ENCODE measurements at regions of chr4 and their contacts with region 1.

Region 1: GRCh38 chr4:152385551-152385950 is 150.3 kb downstream of the FBXW7 start:
- DNase-seq: peak in 4 of 14 experiments; percentile 10 to 28 (median 19)
- ATAC-seq: peak; percentile 53
- H3K4me3 ChIP-seq: no peak overlapping the region
- H3K4me3 Mint-ChIP-seq: no peak overlapping the region
- H3K27ac ChIP-seq: no peak overlapping the region
- H3K27ac Mint-ChIP-seq: peak overlapping the region; percentile 71
- H3K4me1 ChIP-seq: no peaks in the 10 kb centered on the region
- H3K4me1 Mint-ChIP-seq: peaks cover 37% of the 10 kb centered on the region
- H3K27me3 ChIP-seq: no peaks in the 10 kb centered on the region
- H3K27me3 Mint-ChIP-seq: no peaks in the 10 kb centered on the region
- CTCF ChIP-seq: peak; percentile 72

Region 2: DNA sequence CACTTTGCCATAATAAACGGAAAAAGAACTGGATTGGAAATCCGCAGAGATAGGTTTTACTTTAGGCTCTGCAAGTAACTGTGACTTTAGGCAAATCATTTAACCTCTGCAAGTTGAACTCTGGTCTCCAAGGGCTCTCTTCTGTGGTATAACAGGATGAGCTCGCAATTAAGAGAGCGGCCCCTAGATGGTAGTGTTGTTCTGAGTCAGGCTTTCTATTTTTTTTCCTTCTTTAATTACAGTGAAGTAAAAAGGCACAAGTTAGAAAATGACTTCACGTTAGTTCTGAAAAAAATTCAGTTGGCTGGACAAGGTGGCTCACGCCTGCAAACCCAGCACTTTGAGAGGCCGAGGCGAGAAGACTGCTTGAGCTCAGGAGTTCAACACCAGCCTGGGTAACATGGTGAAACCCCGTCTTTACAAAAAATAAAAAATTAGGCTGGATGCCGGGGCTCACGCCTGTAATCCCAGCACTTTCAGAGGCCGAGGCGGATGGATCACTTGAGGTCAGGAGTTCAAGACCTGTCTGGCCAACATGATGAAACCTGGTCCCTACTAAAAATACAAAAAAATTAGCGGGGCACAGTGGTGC is 1268.1 kb before region 1 on chr4:
- CTCF ChIA-PET with region 1: no interaction called
- POLR2A ChIA-PET with region 1: no interaction called
- intact Hi-C with region 1: loop called (anchors 5 kb)
- DNase-seq: peak; percentile 16 to 68 (median 41)
- ATAC-seq: peak; percentile 86
- H3K4me3 ChIP-seq: no peak overlapping the region
- H3K4me3 Mint-ChIP-seq: no peak overlapping the region
- H3K27ac ChIP-seq: no peak overlapping the region
- H3K27ac Mint-ChIP-seq: no peak overlapping the region
- H3K4me1 ChIP-seq: no peaks in the 10 kb centered on the region
- H3K4me1 Mint-ChIP-seq: peaks cover 7% of the 10 kb centered on the region
- H3K27me3 ChIP-seq: no peaks in the 10 kb centered on the region
- H3K27me3 Mint-ChIP-seq: no peaks in the 10 kb centered on the region
- CTCF ChIP-seq: peak; percentile 67

Region 3: DNA sequence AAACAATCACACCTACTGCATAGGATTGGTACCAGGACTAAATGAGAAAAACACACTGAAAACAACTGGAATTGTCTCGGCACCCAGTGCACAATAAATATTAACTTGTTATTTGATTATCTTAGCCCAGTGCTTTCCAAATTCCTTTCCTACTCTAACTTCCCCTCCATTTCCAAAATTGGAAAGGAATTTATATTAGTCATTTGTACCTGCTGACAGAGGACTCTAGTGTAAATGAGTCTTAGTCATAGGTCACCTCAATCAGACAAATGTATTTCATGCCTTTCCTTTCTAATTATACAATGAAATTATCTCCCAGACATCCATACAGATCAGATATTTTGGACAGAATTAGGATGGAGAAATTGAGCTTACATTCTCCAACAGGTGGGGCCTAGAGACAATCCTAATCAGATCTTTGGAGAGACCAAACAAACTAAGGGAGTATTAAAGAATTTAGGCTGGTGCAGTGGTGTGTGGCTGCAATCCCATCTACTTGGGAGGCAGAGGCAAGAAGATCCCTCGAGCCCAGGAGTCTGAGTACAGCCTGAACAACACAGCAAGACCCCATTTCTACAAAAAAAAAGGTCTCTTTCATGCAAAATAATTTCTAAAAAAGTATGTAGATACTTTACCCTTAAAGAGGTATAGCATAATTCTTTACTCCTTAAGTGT is 1070.2 kb before region 1 on chr4:
- CTCF ChIA-PET with region 1: no interaction called
- POLR2A ChIA-PET with region 1: no interaction called
- intact Hi-C with region 1: no loop called
- DNase-seq: no peak
- ATAC-seq: no peak
- H3K4me3 ChIP-seq: no peak overlapping the region
- H3K4me3 Mint-ChIP-seq: no peak overlapping the region
- H3K27ac ChIP-seq: no peak overlapping the region
- H3K27ac Mint-ChIP-seq: no peak overlapping the region
- H3K4me1 ChIP-seq: no peaks in the 10 kb centered on the region
- H3K4me1 Mint-ChIP-seq: no peaks in the 10 kb centered on the region
- H3K27me3 ChIP-seq: no peaks in the 10 kb centered on the region
- H3K27me3 Mint-ChIP-seq: peaks cover 27% of the 10 kb centered on the region
- CTCF ChIP-seq: no peak

Region 4: DNA sequence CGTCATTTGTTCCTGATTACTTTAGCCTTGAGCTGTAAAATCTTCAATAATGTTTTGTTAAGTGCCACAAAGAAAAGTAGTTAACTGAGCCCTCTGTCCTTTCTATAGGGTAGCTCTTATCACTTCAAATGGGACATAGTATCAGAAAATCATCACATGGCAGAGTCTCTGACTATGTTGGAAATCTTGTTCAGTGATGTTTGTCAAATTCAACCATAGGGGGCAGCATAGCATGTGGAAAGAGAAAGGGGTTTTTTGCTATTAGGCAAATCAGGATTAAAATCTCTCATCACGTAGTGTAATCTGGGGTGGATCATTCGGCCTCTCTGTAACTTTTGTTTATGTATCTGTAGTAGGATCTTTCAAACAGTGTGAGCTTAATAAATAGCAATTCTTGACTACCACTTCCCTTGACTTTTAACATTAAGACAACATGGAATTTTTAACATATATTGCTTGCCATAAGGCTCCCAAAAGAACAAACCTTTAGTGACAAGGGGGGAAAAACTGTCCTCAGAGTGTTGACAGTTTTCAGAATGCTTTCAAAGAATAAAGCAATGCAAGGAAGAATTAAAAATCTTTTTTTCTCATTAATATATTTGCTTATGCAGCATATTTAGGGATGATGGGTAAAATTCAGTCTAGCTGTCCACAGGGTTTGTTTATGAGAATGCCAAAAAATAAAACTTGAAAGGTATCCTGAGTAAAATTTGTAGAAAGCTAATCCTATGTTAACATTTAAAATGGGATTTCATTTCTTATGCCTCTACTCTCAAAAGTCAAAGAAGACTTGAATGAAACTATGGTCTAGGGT is 23.2 kb after region 1 on chr4:
- CTCF ChIA-PET with region 1: no interaction called
- POLR2A ChIA-PET with region 1: no interaction called
- intact Hi-C with region 1: no loop called
- DNase-seq: peak in 4 of 14 experiments; percentile 11 to 67 (median 62)
- ATAC-seq: peak; percentile 46
- H3K4me3 ChIP-seq: no peak overlapping the region
- H3K4me3 Mint-ChIP-seq: no peak overlapping the region
- H3K27ac ChIP-seq: no peak overlapping the region
- H3K27ac Mint-ChIP-seq: no peak overlapping the region
- H3K4me1 ChIP-seq: no peaks in the 10 kb centered on the region
- H3K4me1 Mint-ChIP-seq: peaks cover 26% of the 10 kb centered on the region
- H3K27me3 ChIP-seq: no peaks in the 10 kb centered on the region
- H3K27me3 Mint-ChIP-seq: no peaks in the 10 kb centered on the region
- CTCF ChIP-seq: peak; percentile 64

Region 5: GRCh38 chr4:152556283-152556682 is 170.7 kb after region 1 on chr4:
- CTCF ChIA-PET with region 1: no interaction called
- POLR2A ChIA-PET with region 1: no interaction called
- intact Hi-C with region 1: no loop called
- DNase-seq: peak in 3 of 14 experiments; percentile 29 to 62 (median 29)
- ATAC-seq: no peak
- H3K4me3 ChIP-seq: peak overlapping the region; percentile 6
- H3K4me3 Mint-ChIP-seq: peak overlapping the region; percentile 48
- H3K27ac ChIP-seq: no peak overlapping the region
- H3K27ac Mint-ChIP-seq: peak overlapping the region; percentile 77
- H3K4me1 ChIP-seq: peaks cover 32% of the 10 kb centered on the region
- H3K4me1 Mint-ChIP-seq: peaks cover 44% of the 10 kb centered on the region
- H3K27me3 ChIP-seq: no peaks in the 10 kb centered on the region
- H3K27me3 Mint-ChIP-seq: no peaks in the 10 kb centered on the region
- CTCF ChIP-seq: no peak

Region 6: GRCh38 chr4:153326513-153326912 is 941.0 kb after region 1 on chr4:
- CTCF ChIA-PET with region 1: no interaction called
- POLR2A ChIA-PET with region 1: no interaction called
- intact Hi-C with region 1: no loop called
- DNase-seq: no peak
- ATAC-seq: no peak
- H3K4me3 ChIP-seq: no peak overlapping the region
- H3K4me3 Mint-ChIP-seq: no peak overlapping the region
- H3K27ac ChIP-seq: no peak overlapping the region
- H3K27ac Mint-ChIP-seq: no peak overlapping the region
- H3K4me1 ChIP-seq: no peaks in the 10 kb centered on the region
- H3K4me1 Mint-ChIP-seq: no peaks in the 10 kb centered on the region
- H3K27me3 ChIP-seq: no peaks in the 10 kb centered on the region
- H3K27me3 Mint-ChIP-seq: no peaks in the 10 kb centered on the region
- CTCF ChIP-seq: no peak